MCF 10A (cell line): ENCODE measurements at regions of chr2 and their contacts with region 1.

Region 1: GRCh38 chr2:231463698-231464575 is at the start of gene NCL:
- DNase-seq: peak; percentile 98
- H3K4me3 Mint-ChIP-seq: peak within 1 kb of the TSS; percentile 88
- H3K27ac Mint-ChIP-seq: peak within 1 kb of the TSS; percentile 100
- H3K4me1 Mint-ChIP-seq: peaks cover 33% of the 10 kb centered on the region
- H3K27me3 Mint-ChIP-seq: no peaks in the 10 kb centered on the region
- CTCF ChIP-seq: no peak
- total RNA-seq, gene NCL: 578 and 778 TPM in 2 replicates

Region 2: GRCh38 chr2:231355802-231356465 is 108.0 kb before region 1 on chr2:
- CTCF ChIA-PET with region 1: no interaction called
- POLR2A ChIA-PET with region 1: no interaction called
- intact Hi-C with region 1: no loop called
- DNase-seq: no peak
- H3K4me3 Mint-ChIP-seq: no peak overlapping the region
- H3K27ac Mint-ChIP-seq: no peak overlapping the region
- H3K4me1 Mint-ChIP-seq: no peaks in the 10 kb centered on the region
- H3K27me3 Mint-ChIP-seq: no peaks in the 10 kb centered on the region
- CTCF ChIP-seq: no peak

Region 3: GRCh38 chr2:231452799-231453508 is 11.0 kb before region 1 on chr2:
- CTCF ChIA-PET with region 1: interaction called, 19 read pairs
- POLR2A ChIA-PET with region 1: interaction called, 74 read pairs
- intact Hi-C with region 1: no loop called
- DNase-seq: peak; percentile 30
- H3K4me3 Mint-ChIP-seq: no peak overlapping the region
- H3K27ac Mint-ChIP-seq: peak overlapping the region; percentile 42
- H3K4me1 Mint-ChIP-seq: no peaks in the 10 kb centered on the region
- H3K27me3 Mint-ChIP-seq: no peaks in the 10 kb centered on the region
- CTCF ChIP-seq: no peak

Region 4: GRCh38 chr2:231475965-231476364 is 12.0 kb after region 1 on chr2:
- CTCF ChIA-PET with region 1: interaction called, 39 read pairs
- POLR2A ChIA-PET with region 1: interaction called, 30 read pairs
- intact Hi-C with region 1: no loop called
- DNase-seq: no peak
- H3K4me3 Mint-ChIP-seq: no peak overlapping the region
- H3K27ac Mint-ChIP-seq: no peak overlapping the region
- H3K4me1 Mint-ChIP-seq: peaks cover 8% of the 10 kb centered on the region
- H3K27me3 Mint-ChIP-seq: peaks cover 12% of the 10 kb centered on the region
- CTCF ChIP-seq: no peak

Region 5: DNA sequence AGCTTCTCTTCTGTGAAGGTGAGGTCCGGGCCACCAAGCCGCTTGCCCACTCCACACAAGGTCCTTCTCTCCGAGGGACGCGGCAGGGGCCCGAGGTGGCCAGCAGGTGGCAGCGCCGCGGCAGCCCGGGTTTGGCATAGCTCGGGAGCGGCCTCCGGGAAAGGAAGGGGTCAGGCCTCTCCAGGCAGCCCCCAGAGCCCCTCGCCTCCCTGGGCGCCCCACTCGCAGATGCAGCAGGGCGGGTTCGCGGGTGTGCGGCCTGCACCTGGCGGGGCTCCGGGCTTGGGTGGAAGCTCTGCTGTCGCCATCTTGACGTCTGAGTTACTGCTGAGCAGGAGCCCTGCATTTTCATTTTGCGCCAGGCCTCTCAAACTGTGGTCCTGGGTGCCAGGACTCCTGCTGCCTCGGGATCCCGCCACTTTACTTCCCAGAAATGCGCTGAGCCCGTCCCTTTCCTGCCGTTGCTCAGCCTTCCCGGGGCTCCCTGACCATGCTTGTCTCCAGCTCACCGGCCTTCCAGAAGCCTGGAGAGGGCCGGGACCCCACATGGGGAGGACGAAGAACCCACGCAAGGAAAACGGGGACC is 19.0 kb after region 1 on chr2:
- CTCF ChIA-PET with region 1: interaction called, 39 read pairs
- POLR2A ChIA-PET with region 1: interaction called, 30 read pairs
- intact Hi-C with region 1: no loop called
- DNase-seq: peak; percentile 70
- H3K4me3 Mint-ChIP-seq: peak overlapping the region; percentile 38
- H3K27ac Mint-ChIP-seq: peak overlapping the region; percentile 75
- H3K4me1 Mint-ChIP-seq: peaks cover 9% of the 10 kb centered on the region
- H3K27me3 Mint-ChIP-seq: no peaks in the 10 kb centered on the region
- CTCF ChIP-seq: peak; percentile 86

Region 6: GRCh38 chr2:231514103-231514950 is 50.4 kb after region 1 on chr2:
- CTCF ChIA-PET with region 1: interaction called, 3 read pairs
- POLR2A ChIA-PET with region 1: interaction called, 36 read pairs
- intact Hi-C with region 1: no loop called
- DNase-seq: peak; percentile 98
- H3K4me3 Mint-ChIP-seq: peak overlapping the region; percentile 83
- H3K27ac Mint-ChIP-seq: peak overlapping the region; percentile 95
- H3K4me1 Mint-ChIP-seq: peaks cover 7% of the 10 kb centered on the region
- H3K27me3 Mint-ChIP-seq: no peaks in the 10 kb centered on the region
- CTCF ChIP-seq: no peak

Region 7: GRCh38 chr2:231604685-231605606 is 141.0 kb after region 1 on chr2:
- CTCF ChIA-PET with region 1: no interaction called
- POLR2A ChIA-PET with region 1: interaction called, 14 read pairs
- intact Hi-C with region 1: no loop called
- DNase-seq: peak; percentile 96
- H3K4me3 Mint-ChIP-seq: peak overlapping the region; percentile 60
- H3K27ac Mint-ChIP-seq: peak overlapping the region; percentile 92
- H3K4me1 Mint-ChIP-seq: peaks cover 11% of the 10 kb centered on the region
- H3K27me3 Mint-ChIP-seq: no peaks in the 10 kb centered on the region
- CTCF ChIP-seq: no peak

Region 8: DNA sequence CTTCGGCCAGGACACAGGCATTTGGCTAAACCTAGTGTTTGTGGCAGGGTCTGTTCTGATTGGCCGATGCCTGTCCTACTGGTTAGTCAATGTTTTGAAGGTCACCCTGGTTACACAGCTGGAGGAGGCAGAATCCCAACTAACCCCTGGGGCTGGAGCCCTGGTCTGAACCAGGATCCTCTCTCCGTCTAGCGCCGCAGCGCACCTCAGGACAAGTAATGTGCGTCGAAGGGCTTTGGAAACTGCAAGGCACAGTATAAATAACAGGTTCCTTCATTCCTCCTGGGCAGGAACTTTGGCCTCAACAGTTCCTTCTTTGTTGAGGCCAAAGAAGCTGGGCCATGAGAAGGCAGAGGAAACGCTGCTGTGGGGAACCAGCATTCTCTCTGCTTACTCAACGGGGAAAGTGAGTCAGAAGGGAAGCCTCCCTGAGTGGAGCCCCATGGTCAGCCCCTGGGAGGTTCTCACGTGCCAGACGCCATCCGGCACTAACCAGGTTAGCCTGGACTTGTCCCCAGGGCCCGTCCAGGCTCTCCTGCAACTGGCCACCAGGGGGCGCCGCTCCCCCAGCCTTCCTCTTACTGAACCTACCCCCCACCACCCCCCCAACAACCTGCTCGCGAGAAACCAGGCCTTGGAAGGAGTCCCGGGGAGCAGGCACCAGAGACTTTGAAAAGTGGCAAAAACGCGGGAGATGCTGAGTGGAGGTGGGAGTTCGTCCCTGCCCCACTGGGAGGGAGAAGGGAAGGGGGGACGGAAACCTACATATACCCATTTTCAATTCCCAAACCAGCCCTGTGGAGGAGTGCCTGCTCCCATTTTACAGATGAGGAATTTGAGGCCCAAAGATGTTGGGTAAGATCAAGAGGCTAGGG is 148.5 kb after region 1 on chr2:
- CTCF ChIA-PET with region 1: no interaction called
- POLR2A ChIA-PET with region 1: interaction called, 14 read pairs
- intact Hi-C with region 1: no loop called
- DNase-seq: peak; percentile 95
- H3K4me3 Mint-ChIP-seq: peak overlapping the region; percentile 63
- H3K27ac Mint-ChIP-seq: peak overlapping the region; percentile 92
- H3K4me1 Mint-ChIP-seq: peaks cover 38% of the 10 kb centered on the region
- H3K27me3 Mint-ChIP-seq: no peaks in the 10 kb centered on the region
- CTCF ChIP-seq: peak; percentile 95